Tibial artery (tissue), 4 donors: ENCODE measurements at regions of chr12 and their contacts with region 1.

Region 1: GRCh38 chr12:43776498-43776897 is 17.7 kb downstream of the IRAK4 start:
- DNase-seq: no peak
- H3K4me3 ChIP-seq: no peak overlapping the region
- H3K27ac ChIP-seq: no peak overlapping the region
- H3K4me1 ChIP-seq: no peaks in the 10 kb centered on the region
- H3K27me3 ChIP-seq: no peaks in the 10 kb centered on the region
- CTCF ChIP-seq: peak in 1 of 2 experiments; percentile 15

Region 2: GRCh38 chr12:43882578-43883178 is 106.2 kb after region 1 on chr12:
- intact Hi-C with region 1: loop called (anchors 10 kb)
- DNase-seq: no peak
- H3K4me3 ChIP-seq: no peak overlapping the region
- H3K27ac ChIP-seq: no peak overlapping the region
- H3K4me1 ChIP-seq: no peaks in the 10 kb centered on the region
- H3K27me3 ChIP-seq: no peaks in the 10 kb centered on the region
- CTCF ChIP-seq: peak; percentile 74 to 75

Region 3: GRCh38 chr12:44031472-44032185 is 255.1 kb after region 1 on chr12:
- intact Hi-C with region 1: no loop called
- DNase-seq: no peak
- H3K4me3 ChIP-seq: no peak overlapping the region
- H3K27ac ChIP-seq: no peak overlapping the region
- H3K4me1 ChIP-seq: no peaks in the 10 kb centered on the region
- H3K27me3 ChIP-seq: no peaks in the 10 kb centered on the region
- CTCF ChIP-seq: no peak